ENCODE measurements at regions of chr12 and their contacts with region 1.

Region 1: DNA sequence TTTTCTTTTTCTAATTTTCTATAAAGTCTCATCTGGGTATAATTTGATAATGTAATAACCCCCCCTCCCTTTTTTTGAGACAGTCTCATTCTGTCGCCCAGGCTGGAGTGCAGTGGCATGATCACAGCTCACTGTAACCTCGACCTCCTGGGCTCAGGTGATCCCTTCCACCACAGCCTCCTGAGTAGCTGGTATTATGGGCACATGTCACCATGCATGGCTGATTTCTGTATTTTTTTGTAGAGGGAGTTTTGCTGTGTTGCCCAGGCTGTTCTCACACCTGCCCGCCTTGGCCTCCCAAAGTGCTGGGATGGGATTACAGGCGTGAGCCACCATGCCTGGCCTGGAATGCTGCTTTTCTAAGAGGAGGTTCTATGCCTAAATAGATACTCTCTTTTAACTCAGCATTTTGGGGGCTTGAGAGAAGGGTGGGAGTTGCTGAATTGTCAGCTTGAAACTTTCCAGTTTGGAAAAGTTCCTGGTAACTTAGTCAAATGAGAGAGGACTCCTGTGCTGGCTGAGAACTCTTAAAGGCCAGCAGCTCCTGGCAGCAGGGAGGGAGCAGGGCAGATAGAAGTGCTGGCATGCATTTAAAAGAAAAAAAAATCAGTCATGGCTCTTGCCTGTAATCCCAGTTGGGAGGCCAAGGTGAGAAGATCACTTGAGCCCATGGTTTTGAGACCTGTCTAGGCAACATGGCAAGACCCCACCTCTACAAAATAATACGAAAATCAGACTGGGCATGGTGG is 13.0 kb downstream of the NUDT4 start:
- DNase-seq: peak in 3 of 7 donors; percentile 34 to 43 (median 36)
- H3K4me3 ChIP-seq: no peak overlapping the region
- H3K27ac ChIP-seq: peak overlapping the region; percentile 35 to 79 (median 51)
- H3K4me1 ChIP-seq: peaks cover 52 to 68% of the 10 kb centered on the region in 2 donors
- H3K27me3 ChIP-seq: no peaks in the 10 kb centered on the region
- CTCF ChIP-seq: no peak
- POLR2A ChIP-seq: no peak

Region 2: DNA sequence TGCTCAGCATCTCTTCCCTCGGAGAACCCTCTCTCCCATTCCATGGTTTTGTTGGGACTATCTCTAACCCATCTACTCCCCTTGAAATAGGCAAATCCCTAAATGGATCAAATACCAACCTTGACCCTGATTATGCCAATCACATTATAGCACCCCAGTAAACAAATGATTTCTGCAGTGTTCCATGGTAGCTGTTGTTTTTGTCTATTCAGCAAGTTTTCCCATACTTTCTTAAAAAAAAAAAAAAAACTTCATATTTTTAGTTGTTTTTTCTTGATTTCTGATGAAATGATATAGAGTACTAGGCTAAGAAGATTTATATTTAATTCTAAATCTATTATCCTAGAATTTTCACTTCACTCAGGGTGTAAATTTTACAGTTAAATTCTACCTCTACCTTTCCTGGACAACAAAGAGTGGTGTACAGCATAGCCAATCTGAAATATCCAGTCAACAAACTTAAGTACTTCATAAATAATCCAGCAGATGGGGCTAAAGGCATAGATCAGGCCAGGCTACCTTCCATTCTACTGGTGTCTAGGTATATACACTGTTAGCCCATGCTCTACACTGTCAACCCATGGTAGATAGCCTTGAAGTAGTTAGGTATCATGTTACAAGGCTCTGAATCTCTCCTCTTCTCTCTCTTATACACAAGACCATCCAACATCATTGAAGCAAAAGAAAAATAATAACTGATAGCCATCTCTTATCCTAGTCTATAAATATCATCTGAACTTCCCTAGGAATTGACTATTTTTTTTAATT is 605.7 kb before region 1 on chr12:
- intact Hi-C with region 1: loop called (anchors 10 kb)
- DNase-seq: peak in 4 of 7 donors; percentile 17 to 34 (median 21)
- H3K4me3 ChIP-seq: no peak overlapping the region
- H3K27ac ChIP-seq: no peak overlapping the region
- H3K4me1 ChIP-seq: peaks cover 0 to 8% of the 10 kb centered on the region in 2 donors
- H3K27me3 ChIP-seq: no peaks in the 10 kb centered on the region
- CTCF ChIP-seq: peak; percentile 23 to 74 (median 72)
- POLR2A ChIP-seq: no peak